ENCODE measurements at regions of chr21 and their contacts with region 1.

Region 1: GRCh38 chr21:33947451-33948095 is 32.0 kb upstream of the ATP5PO start:
- DNase-seq: peak; percentile 78
- CTCF ChIP-seq: no peak

Region 2: GRCh38 chr21:33964706-33965325 is 17.2 kb after region 1 on chr21:
- CTCF ChIA-PET with region 1: interaction called, 15 read pairs
- POLR2A ChIA-PET with region 1: no interaction called
- DNase-seq: no peak
- CTCF ChIP-seq: no peak

Region 3: DNA sequence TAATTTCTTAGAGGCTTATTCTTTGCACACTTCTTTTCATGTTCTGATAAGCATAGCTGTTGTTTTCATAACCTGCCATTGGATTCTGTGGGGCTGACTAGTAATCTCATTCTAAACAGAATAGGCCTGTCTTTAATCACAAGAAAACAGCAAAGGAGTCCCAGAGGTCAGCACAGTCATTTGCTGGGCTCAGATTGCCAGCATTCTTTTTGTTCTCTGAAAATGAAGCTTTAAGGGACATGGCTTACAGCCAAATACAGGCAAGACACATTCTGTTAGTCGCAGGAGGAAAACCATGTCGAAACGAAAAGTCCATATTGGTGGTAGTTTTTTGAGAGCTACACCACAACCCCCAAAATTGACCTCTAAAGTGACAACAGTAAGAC is 200.8 kb after region 1 on chr21:
- CTCF ChIA-PET with region 1: no interaction called
- POLR2A ChIA-PET with region 1: no interaction called
- DNase-seq: no peak
- CTCF ChIP-seq: no peak